ENCODE measurements at regions of chr17 and their contacts with region 1.

Region 1: GRCh38 chr17:39473310-39473709 is 12.0 kb downstream of the CDK12 start:
- DNase-seq: no peak
- H3K4me3 ChIP-seq: no peak overlapping the region
- H3K27ac ChIP-seq: no peak overlapping the region
- H3K4me1 ChIP-seq: no peaks in the 10 kb centered on the region
- H3K27me3 ChIP-seq: no peaks in the 10 kb centered on the region
- CTCF ChIP-seq: no peak

Region 2: GRCh38 chr17:39401412-39402243 is 71.7 kb before region 1 on chr17 and contains the start of gene FBXL20:
- dilution Hi-C with region 1: no loop called
- DNase-seq: peak; percentile 50
- H3K4me3 ChIP-seq: peak within 1 kb of the TSS; percentile 69 to 96 (median 74)
- H3K27ac ChIP-seq: peak within 1 kb of the TSS; percentile 73
- H3K4me1 ChIP-seq: peaks cover 19% of the 10 kb centered on the region
- H3K27me3 ChIP-seq: no peaks in the 10 kb centered on the region
- CTCF ChIP-seq: no peak
- polyA plus RNA-seq, gene FBXL20: 3.5 to 5.8 TPM (median 4.9 TPM) in 3 replicates

Region 3: GRCh38 chr17:39527220-39527813 is 54.0 kb after region 1 on chr17:
- dilution Hi-C with region 1: loop called (anchors 10 kb)
- DNase-seq: no peak
- H3K4me3 ChIP-seq: no peak overlapping the region
- H3K27ac ChIP-seq: no peak overlapping the region
- H3K4me1 ChIP-seq: no peaks in the 10 kb centered on the region
- H3K27me3 ChIP-seq: no peaks in the 10 kb centered on the region
- CTCF ChIP-seq: peak; percentile 25 to 52 (median 29)